ENCODE measurements at regions of chr10 and their contacts with region 1.

Region 1: DNA sequence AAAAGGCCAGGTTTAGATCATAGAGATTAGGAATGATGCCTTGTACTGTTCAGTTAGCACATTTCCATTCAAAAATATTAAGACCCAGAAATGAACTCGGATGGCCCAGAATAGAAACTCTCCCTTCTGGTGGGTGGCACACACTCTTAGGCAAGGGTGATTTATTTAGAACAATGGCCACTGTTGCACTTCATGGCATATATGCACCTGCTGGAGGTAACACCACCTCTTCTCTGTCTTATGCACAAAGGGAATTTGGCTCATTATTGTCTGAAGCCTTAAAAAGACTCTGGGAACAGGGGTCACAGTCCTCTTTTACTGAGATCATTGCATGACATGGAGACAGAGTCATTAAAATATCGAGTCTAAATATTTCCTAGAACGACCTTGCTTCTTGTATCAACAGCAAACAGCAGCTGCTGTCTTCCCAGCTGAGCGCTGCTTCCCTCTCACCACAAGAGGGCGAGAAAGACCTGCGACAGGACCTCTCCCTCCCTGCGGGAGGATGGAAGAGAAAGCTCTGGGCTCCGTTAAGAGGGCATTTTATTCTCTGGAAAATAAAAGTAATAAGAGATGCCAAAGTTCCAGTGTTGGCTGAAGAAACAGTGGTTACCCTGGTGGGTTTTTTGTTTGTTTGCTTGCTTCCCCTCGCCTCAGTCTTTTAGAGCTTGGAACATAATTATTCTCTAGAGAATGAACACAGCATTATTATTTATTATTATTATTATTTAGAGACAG is 13.6 kb upstream of the BAMBI start:
- ATAC-seq: peak; percentile 48 to 80 (median 69)
- H3K4me3 ChIP-seq: no peak overlapping the region
- H3K27ac ChIP-seq: no peak overlapping the region
- H3K4me1 ChIP-seq: peaks cover 0 to 5% of the 10 kb centered on the region in 2 donors

Region 2: DNA sequence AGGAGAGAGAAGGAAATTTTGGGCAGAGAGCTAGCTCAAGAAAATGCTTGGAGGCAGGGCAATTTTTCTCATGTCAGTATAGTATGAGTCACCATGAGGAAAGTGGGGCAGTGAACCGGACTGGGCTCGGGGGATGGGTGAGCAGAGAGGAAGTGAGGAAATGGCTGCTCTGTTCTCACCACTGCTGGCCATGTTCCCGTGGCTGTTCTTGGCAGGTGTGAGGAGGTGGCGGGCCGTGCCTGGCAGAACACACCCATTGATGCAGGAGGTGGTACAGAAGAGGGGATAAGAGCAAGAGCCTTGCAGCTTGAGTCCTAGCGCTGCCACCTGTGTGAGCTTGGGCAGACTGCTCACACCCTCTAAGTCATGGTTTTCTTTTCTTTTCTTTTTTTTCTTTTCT is 320.7 kb after region 1 on chr10:
- in situ Hi-C with region 1: loop called in 2 of 9 experiments (anchors 10 kb)
- ATAC-seq: peak in 7 of 8 experiments; percentile 57 to 88 (median 77)
- H3K4me3 ChIP-seq: no peak overlapping the region
- H3K27ac ChIP-seq: no peak overlapping the region
- H3K4me1 ChIP-seq: peaks cover 0 to 6% of the 10 kb centered on the region in 2 donors

Region 3: GRCh38 chr10:29063806-29064644 is 400.3 kb after region 1 on chr10:
- in situ Hi-C with region 1: no loop called
- ATAC-seq: peak in 5 of 8 experiments; percentile 81 to 99 (median 90)
- H3K4me3 ChIP-seq: no peak overlapping the region
- H3K27ac ChIP-seq: peak overlapping the region in 1 of 2 donors; percentile 70
- H3K4me1 ChIP-seq: peaks cover 11 to 20% of the 10 kb centered on the region in 2 donors

Measured in motor neuron (in vitro differentiated cells).